Colonic mucosa (tissue), 4 donors: ENCODE measurements at regions of chr7 and their contacts with region 1.

Region 1: DNA sequence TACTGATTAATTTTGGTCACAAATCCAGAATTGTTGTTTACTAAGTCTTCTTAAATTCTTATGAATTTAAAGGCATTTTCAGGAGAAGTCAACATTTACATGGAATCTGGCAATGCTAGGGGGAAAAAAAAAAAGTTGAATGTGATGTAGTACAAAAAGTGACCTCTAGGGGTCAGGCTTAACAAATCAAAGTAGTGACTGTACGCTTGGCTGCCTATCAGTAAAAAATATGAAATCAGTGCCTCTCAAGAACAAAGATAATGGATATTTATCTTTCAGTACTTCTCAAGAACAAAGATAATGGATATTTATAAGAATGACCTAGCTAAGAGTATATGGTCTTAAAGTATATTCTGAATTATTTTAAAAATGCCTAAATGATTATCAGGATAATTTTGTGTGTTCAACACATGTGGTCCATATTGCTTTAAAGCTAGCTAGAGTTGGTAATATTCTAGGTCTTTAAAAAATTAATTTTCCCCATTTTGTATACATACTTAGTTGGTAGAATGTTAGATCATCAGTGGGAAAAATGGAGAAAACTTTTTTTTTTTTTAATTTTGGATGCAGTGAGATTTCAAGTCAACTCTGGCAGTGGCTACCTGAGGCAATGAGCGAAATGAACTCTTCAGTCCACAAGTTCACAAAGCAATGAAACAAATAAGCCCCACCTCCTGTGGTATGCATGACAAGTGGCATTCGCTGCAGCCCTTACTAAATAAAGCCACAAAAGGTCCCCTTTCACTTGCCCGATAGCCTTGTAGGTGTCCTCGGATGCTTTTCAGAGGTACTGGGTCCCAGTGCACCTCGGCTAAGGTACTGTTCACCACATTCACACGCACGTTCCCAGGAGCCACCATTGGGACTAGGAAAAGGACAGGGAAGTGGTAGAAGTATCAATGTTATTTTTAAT is 51.2 kb upstream of the LAMB4 start:
- DNase-seq: no peak
- H3K4me3 ChIP-seq: no peak overlapping the region
- H3K27ac ChIP-seq: no peak overlapping the region
- H3K4me1 ChIP-seq: no peaks in the 10 kb centered on the region
- H3K27me3 ChIP-seq: no peaks in the 10 kb centered on the region
- CTCF ChIP-seq: peak; percentile 70

Region 2: GRCh38 chr7:108459931-108460551 is 278.7 kb after region 1 on chr7:
- intact Hi-C with region 1: loop called (anchors 10 kb)
- DNase-seq: no peak
- H3K4me3 ChIP-seq: no peak overlapping the region
- H3K27ac ChIP-seq: no peak overlapping the region
- H3K4me1 ChIP-seq: peaks cover 3% of the 10 kb centered on the region
- H3K27me3 ChIP-seq: peaks cover 28% of the 10 kb centered on the region
- CTCF ChIP-seq: no peak

Region 3: DNA sequence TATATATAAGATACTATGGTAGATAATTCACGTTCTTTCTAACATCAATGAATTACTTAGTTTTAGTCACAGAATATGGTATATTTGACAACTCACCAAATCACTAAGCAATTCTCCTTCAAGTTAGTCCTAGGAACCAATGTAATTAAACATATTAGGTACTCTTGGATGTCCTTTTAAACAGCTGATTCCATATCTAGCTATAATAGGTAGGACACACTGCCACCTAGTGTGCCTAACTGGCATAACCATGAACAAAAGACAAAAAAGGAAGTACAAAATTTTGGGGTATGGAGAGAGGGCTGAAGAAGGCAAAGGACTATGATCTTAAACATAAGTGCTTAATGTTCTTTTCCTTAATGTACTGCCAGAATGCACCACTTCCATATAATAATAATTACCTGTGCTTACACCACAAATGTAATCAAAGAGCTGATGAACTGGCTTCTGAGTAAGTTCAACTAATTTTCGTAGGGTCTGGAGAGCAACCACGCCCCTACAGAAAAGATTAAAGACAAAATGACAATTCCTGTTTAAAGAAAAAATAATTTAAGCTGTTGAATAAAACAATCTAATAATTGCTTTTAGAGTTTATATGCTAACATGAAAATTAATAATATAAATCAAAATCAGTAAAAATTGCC is 315.9 kb after region 1 on chr7:
- intact Hi-C with region 1: loop called (anchors 5 kb)
- DNase-seq: peak; percentile 32
- H3K4me3 ChIP-seq: no peak overlapping the region
- H3K27ac ChIP-seq: no peak overlapping the region
- H3K4me1 ChIP-seq: no peaks in the 10 kb centered on the region
- H3K27me3 ChIP-seq: no peaks in the 10 kb centered on the region
- CTCF ChIP-seq: peak; percentile 75